ENCODE measurements at regions of chr4 and their contacts with region 1.

Region 1: DNA sequence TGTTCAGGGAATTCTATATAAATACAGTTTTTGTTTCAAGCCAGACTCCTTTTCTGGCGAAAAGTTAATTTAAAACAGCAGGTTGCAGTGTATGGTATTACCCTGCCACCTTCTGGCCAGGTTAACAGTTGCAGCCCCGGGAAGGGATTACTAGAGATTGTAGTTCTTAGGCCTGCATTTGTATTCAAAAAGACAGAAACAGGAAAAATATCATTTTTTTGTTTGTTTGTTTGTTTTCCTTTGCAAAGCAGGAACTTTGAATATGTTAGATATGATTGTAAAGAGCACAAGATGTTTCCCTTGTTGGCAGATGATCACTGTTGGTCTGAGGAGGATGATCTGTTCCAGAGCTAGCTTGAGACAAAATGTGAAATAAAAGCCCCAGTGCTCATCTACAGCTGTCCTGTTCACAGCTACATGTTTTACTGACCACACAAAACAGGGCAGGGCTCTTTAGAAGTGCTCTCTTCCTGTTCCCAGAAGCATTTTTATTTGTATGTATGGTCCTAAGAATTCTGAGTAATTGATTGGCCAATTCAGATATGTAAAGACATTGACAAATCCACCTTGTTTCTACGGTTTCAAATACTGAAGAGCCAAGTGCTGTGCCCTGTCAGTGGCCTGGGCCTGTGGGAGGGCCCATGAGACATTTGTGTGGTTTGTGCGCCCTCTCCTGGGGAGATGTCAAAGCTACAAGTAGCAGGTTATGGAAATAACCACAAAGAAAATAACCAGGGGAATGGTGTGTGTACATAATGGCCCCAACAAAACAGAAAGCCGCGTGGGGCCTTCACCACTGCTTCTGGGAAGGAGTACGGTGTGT is 57.9 kb downstream of the CLDN22 start:
- DNase-seq: peak; percentile 88 to 92
- H3K4me3 ChIP-seq: no peak overlapping the region
- H3K27ac ChIP-seq: peak overlapping the region; percentile 44 to 63 (median 51)
- H3K4me1 ChIP-seq: peaks cover 19 to 36% (median 28%) of the 10 kb centered on the region in 4 donors
- H3K27me3 ChIP-seq: no peaks in the 10 kb centered on the region
- CTCF ChIP-seq: peak in 5 of 7 experiments; percentile 68 to 87 (median 77)
- EP300 ChIP-seq: no peak
- POLR2A ChIP-seq: no peak

Region 2: DNA sequence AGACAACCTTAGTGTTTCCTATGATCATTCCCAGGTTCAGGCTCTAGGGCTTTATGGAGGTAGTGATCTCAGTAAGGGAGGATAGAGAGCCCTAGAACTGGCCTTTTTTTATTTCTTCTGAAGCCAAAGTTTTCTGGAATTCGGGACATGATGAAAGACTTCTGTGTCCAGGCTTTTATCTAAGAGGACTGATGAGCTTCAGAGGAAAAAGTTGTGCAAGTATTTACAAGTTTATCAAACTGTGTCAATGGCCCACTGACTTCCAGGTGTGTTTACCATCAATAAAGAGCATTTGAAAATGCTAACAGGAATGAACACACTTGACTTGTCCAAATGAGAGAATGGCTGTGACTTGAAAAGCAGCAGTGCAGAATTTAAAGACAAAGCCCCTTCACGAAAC is 599.6 kb before region 1 on chr4:
- intact Hi-C with region 1: no loop called
- DNase-seq: no peak
- H3K4me3 ChIP-seq: no peak overlapping the region
- H3K27ac ChIP-seq: no peak overlapping the region
- H3K4me1 ChIP-seq: no peaks in the 10 kb centered on the region
- H3K27me3 ChIP-seq: no peaks in the 10 kb centered on the region
- CTCF ChIP-seq: no peak
- EP300 ChIP-seq: no peak
- POLR2A ChIP-seq: no peak

Region 3: DNA sequence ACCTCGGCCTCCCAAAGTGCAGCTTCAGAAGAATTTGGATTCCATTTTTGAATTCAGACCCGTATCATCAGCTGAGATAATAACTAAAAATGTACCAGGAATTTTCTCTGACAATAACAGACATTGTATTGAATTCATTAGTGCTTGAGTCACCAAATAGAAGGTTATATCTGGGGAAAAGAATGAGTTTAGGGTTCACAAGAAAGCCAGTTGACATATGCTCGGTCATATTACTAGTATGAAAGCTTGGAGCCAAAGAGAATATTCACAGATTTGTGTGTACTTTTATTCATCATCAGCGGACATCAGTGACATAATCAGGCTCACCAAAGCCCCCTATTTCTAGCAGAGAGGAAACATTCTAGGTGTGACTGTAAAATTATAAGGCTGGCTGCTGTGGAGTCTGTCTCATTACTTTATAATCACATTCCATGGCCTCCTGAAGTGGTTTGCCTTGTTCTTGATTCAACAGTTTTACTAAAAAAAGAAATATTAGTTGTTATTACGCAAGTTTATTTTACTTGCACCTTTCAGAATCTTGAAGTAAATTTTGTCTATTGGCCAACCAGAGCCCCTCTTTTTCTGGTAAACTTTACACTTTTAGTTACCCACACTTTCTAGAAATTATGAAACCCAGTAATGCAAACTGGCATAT is 330.3 kb before region 1 on chr4:
- intact Hi-C with region 1: loop called (anchors 5 kb)
- DNase-seq: no peak
- H3K4me3 ChIP-seq: no peak overlapping the region
- H3K27ac ChIP-seq: no peak overlapping the region
- H3K4me1 ChIP-seq: no peaks in the 10 kb centered on the region
- H3K27me3 ChIP-seq: no peaks in the 10 kb centered on the region
- CTCF ChIP-seq: no peak
- EP300 ChIP-seq: no peak
- POLR2A ChIP-seq: no peak

Region 4: DNA sequence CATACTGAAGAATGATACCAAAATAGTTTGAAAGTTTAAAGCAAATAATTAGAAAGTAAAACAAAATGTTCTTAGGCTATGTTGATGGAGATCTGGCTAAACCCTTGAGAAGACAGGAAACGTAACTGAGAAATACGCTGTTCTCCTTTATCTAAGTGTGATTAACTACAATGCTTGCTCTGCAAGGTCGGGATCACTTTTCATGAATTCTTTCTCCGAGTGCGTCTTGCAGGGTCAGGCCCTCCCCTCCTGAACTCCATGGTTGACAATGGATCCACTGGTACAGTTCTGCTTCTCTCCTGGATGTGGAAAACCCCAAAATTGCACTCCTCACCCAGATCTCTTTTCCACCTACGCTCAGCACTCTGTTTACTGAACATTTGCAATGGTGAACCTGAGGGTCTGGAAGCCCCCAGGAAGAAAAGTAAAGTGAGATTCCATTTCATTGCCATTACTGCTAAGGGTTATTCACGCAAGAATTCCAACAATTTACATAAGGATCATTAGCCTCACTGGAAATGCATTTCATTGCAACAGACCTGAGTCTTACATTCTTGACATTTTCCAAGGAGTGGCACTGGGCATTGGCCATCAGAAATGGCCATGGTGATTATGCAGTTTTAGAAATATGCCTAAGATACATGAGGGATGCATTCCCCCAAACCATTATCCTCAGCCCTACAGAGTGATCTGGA is 187.7 kb before region 1 on chr4:
- intact Hi-C with region 1: loop called (anchors 5 kb)
- DNase-seq: no peak
- H3K4me3 ChIP-seq: no peak overlapping the region
- H3K27ac ChIP-seq: no peak overlapping the region
- H3K4me1 ChIP-seq: peaks cover 0 to 10% (median 0%) of the 10 kb centered on the region in 4 donors
- H3K27me3 ChIP-seq: no peaks in the 10 kb centered on the region
- CTCF ChIP-seq: no peak
- EP300 ChIP-seq: no peak
- POLR2A ChIP-seq: no peak

Region 5: GRCh38 chr4:183321079-183321478 is 58.9 kb after region 1 on chr4:
- intact Hi-C with region 1: no loop called
- DNase-seq: no peak
- H3K4me3 ChIP-seq: no peak overlapping the region
- H3K27ac ChIP-seq: no peak overlapping the region
- H3K4me1 ChIP-seq: peaks cover 0 to 8% (median 4%) of the 10 kb centered on the region in 4 donors
- H3K27me3 ChIP-seq: no peaks in the 10 kb centered on the region
- CTCF ChIP-seq: no peak
- EP300 ChIP-seq: no peak
- POLR2A ChIP-seq: no peak

Region 6: DNA sequence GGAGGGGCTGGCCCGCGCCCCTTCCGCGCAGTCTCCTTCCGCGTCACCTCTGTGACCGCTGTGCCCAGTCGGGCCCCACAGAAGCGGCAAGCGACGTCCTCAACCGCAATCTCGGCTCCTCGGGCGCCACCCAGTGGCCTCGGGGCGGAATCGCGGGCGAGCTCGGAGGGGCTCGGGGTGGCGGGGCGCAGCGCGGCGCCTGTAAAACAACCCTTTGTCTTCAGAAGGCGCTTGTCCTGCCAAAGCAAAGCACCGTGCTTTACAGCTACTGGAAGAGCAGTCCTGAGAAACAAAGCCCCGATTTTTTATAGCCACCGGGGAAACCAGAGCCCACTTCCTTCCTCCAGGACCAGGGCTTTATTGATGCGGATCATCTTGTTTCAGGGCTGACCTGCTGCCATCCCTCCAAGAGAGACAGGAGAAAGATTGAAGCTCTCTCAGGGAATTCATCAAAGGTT is 145.0 kb after region 1 on chr4:
- intact Hi-C with region 1: loop called (anchors 10 kb)
- DNase-seq: peak; percentile 88 to 96
- H3K4me3 ChIP-seq: peak overlapping the region; percentile 36 to 46 (median 38)
- H3K27ac ChIP-seq: peak overlapping the region; percentile 13 to 70 (median 61)
- H3K4me1 ChIP-seq: peaks cover 5 to 28% (median 20%) of the 10 kb centered on the region in 4 donors
- H3K27me3 ChIP-seq: no peaks in the 10 kb centered on the region
- CTCF ChIP-seq: peak in 5 of 7 experiments; percentile 72 to 95 (median 94)
- EP300 ChIP-seq: no peak
- POLR2A ChIP-seq: no peak

Measured in stomach (tissue), 19 donors.